ENCODE measurements at regions of chr22 and their contacts with region 1.

Region 1: DNA sequence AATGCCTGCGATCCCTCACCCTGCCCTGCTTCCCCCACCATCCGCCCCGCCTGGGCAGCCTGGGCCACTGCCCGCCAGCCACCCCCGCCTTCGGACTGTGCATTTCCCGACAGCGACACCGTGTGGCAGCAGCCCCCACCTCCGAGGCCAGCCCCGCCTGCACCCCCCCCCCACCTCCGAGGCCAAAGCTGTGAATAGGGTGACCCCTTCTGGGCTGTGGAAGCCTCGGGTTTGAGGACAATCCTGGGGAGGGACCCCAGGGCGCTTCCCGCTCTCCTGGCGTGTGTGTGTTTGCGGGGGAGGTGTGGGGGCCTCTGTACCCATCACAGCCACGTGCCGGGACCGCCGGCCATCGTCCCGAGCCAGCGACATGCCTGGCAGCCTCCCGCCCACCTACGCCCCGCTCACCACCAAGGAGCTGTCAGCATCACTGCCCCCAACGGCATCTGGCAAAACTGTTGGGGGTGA is 33.8 kb upstream of the PPARA start:
- DNase-seq: peak; percentile 95 to 96
- ATAC-seq: peak; percentile 73 to 87 (median 82)
- H3K4me3 ChIP-seq: peak overlapping the region in 1 of 10 donors; percentile 2
- H3K27ac ChIP-seq: peak overlapping the region; percentile 20 to 94 (median 78)
- H3K4me1 ChIP-seq: peaks cover 28 to 71% (median 54%) of the 10 kb centered on the region in 9 donors
- H3K27me3 ChIP-seq: no peaks in the 10 kb centered on the region
- CTCF ChIP-seq: peak; percentile 70 to 84 (median 77)

Region 2: GRCh38 chr22:46006379-46007002 is 110.0 kb before region 1 on chr22:
- intact Hi-C with region 1: loop called in 8 of 10 experiments (anchors 1 to 2 kb)
- DNase-seq: peak; percentile 96 to 97
- ATAC-seq: peak; percentile 55 to 85 (median 76)
- H3K4me3 ChIP-seq: peak overlapping the region in 8 of 10 donors; percentile 3 to 40 (median 32)
- H3K27ac ChIP-seq: peak overlapping the region; percentile 90 to 100 (median 96)
- H3K4me1 ChIP-seq: peaks cover 39 to 76% (median 63%) of the 10 kb centered on the region in 9 donors
- H3K27me3 ChIP-seq: no peaks in the 10 kb centered on the region
- CTCF ChIP-seq: peak; percentile 92 to 98 (median 97)

Measured in heart right ventricle (tissue), 16 donors.